WTC11 (cell line): ENCODE measurements at regions of chr5 and their contacts with region 1.

Region 1: DNA sequence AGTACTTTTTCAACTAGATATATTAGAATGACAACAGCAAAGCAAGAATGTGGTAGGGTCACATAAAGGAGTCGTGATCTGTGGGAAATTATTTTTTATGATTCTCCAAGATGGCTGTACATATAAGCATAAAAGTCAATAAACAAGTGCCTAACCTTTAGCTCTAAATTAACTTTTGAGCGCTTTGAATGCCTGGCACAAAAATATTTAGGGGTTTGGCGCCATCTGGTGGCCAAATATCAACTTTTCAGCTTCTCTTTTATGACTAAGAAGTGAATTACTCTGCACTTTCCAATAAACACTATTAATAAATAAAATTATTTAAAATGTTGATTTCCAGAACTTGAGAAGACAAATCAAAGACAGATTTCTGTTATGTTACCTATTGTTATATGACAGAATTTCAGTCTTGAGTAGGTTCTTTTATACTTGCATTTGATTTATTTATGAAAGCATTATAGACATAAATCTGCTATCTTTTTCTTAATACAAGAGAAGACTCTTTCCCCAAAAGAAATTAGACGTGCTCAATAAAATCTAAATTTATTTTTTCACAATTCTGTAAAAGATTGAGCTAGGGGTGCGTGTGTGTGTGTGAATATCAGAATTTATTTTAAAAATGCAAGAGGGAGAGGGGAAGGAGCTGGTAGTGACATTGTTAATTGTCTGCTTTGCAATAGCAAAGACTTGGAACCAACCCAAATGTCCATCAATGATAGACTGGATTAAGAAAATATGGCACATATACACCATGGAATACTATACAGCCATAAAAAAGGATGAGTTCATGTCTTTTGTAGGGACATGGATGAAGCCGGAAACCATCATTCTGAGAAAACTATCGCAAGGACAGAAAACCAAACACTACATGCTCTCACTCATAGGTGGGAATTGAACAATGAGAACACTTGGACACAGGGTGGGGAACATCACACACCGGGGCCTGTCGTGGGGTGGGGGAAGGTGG is 36.7 kb upstream of the ARRDC3 start:
- DNase-seq: peak; percentile 60
- ATAC-seq: no peak
- H3K4me3 Mint-ChIP-seq: no peak overlapping the region
- H3K27ac Mint-ChIP-seq: no peak overlapping the region
- H3K4me1 Mint-ChIP-seq: peaks cover 25% of the 10 kb centered on the region
- H3K27me3 Mint-ChIP-seq: no peaks in the 10 kb centered on the region
- CTCF ChIP-seq: peak; percentile 74

Region 2: GRCh38 chr5:90866333-90866732 is 553.5 kb before region 1 on chr5:
- CTCF ChIA-PET with region 1: interaction called, 23 read pairs
- POLR2A ChIA-PET with region 1: no interaction called
- DNase-seq: no peak
- ATAC-seq: peak; percentile 64
- H3K4me3 Mint-ChIP-seq: no peak overlapping the region
- H3K27ac Mint-ChIP-seq: no peak overlapping the region
- H3K4me1 Mint-ChIP-seq: peaks cover 7% of the 10 kb centered on the region
- H3K27me3 Mint-ChIP-seq: no peaks in the 10 kb centered on the region
- CTCF ChIP-seq: peak; percentile 25; the same call in 1 of the 2 replicates

Region 3: DNA sequence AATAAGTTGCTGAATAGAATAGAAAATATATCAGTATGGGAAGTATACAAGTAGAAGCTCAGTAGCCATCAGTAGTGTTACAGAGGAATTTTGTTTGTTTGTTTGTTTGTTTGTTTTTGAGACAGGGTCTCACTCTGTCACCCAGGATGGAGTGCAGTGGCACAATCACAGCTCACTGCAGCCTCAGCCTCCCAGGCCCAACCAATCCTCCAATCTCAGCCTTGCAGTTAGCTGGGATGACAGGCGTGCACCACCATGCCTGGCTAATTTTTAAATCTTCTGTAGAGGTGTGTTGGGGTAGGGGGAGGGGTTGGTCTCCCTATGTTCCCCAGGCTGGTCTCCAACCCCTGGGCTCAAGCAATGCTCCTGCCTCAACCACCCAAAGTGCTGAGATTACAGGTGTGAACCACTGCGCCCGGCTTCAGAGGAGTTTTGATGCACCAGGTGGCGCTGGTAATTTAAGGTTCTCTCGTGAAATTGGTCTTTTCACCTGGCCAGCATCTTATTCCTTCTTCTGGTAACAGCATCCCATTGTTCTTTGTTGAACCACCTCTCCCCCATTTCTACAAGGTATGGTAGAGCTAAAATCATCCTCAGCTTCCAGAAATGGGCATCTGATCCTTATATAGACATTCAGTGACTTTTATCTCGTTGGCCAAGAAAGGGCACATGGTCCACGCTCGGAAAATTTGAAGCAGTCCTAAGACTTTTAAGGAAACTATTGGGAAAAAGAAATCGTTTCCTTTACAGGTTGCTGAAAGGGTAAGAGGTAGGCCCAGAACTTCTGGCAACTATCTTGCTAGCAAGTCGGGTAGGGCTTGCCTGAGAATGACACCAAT is 193.8 kb before region 1 on chr5:
- CTCF ChIA-PET with region 1: interaction called, 12 read pairs
- POLR2A ChIA-PET with region 1: no interaction called
- DNase-seq: peak; percentile 74
- ATAC-seq: peak; percentile 94
- H3K4me3 Mint-ChIP-seq: no peak overlapping the region
- H3K27ac Mint-ChIP-seq: no peak overlapping the region
- H3K4me1 Mint-ChIP-seq: peaks cover 3% of the 10 kb centered on the region; the same call in 1 of the 2 replicates
- H3K27me3 Mint-ChIP-seq: no peaks in the 10 kb centered on the region; the same call in 1 of the 2 replicates
- CTCF ChIP-seq: peak; percentile 19; the same call in 1 of the 2 replicates

Region 4: GRCh38 chr5:91408710-91409109 is 11.1 kb before region 1 on chr5:
- CTCF ChIA-PET with region 1: interaction called, 11 read pairs
- POLR2A ChIA-PET with region 1: no interaction called
- DNase-seq: no peak
- ATAC-seq: no peak
- H3K4me3 Mint-ChIP-seq: no peak overlapping the region
- H3K27ac Mint-ChIP-seq: no peak overlapping the region
- H3K4me1 Mint-ChIP-seq: no peaks in the 10 kb centered on the region
- H3K27me3 Mint-ChIP-seq: no peaks in the 10 kb centered on the region
- CTCF ChIP-seq: no peak